Psoas muscle (tissue), 8 donors: ENCODE measurements at regions of chr11 and their contacts with region 1.

Region 1: DNA sequence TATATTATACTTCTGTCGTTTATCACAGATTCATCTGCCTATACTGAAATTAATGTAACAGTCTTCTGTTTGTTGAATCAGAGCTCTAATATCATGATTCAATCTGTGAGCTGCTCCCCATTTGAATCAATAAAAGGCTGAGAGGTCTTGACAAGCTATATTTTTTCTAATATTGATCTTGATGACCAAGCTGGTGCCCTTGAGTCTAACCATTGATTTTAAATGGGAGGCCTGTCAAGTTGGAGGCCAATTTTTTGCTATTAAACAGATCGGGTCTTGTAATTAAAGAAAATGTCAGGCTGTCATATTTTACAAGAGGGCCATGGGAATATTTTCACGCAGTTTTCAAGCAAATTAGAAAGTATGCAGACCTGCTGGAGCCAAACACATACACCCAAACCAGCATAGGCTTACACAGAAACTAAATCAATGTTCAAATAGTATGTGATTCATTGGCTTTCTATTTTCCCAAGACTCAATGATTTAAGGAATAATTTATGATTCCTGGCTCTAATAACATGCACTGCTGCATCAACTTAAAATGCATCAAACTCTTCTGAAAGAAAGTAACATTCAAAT is 286.9 kb downstream of the CNTN5 start:
- DNase-seq: no peak
- ATAC-seq: no peak
- H3K4me3 ChIP-seq: no peak overlapping the region
- H3K27ac ChIP-seq: no peak overlapping the region
- H3K4me1 ChIP-seq: no peaks in the 10 kb centered on the region
- H3K27me3 ChIP-seq: no peaks in the 10 kb centered on the region
- CTCF ChIP-seq: no peak

Region 2: GRCh38 chr11:99368583-99368982 is 61.0 kb after region 1 on chr11:
- intact Hi-C with region 1: loop called in 1 of 2 experiments (anchors 10 kb)
- DNase-seq: no peak
- ATAC-seq: no peak
- H3K4me3 ChIP-seq: no peak overlapping the region
- H3K27ac ChIP-seq: no peak overlapping the region
- H3K4me1 ChIP-seq: peaks cover 17% of the 10 kb centered on the region
- H3K27me3 ChIP-seq: no peaks in the 10 kb centered on the region
- CTCF ChIP-seq: no peak